HEK293 (cell line): ENCODE measurements at regions of chr17 and their contacts with region 1.

Region 1: GRCh38 chr17:50200457-50201275 is 765 bp downstream of the COL1A1 start:
- H3K4me3 ChIP-seq: peak overlapping the region; percentile 41
- H3K27ac ChIP-seq: no peak overlapping the region
- H3K4me1 ChIP-seq: no peaks in the 10 kb centered on the region
- CTCF ChIP-seq: peak; percentile 99

Region 2: DNA sequence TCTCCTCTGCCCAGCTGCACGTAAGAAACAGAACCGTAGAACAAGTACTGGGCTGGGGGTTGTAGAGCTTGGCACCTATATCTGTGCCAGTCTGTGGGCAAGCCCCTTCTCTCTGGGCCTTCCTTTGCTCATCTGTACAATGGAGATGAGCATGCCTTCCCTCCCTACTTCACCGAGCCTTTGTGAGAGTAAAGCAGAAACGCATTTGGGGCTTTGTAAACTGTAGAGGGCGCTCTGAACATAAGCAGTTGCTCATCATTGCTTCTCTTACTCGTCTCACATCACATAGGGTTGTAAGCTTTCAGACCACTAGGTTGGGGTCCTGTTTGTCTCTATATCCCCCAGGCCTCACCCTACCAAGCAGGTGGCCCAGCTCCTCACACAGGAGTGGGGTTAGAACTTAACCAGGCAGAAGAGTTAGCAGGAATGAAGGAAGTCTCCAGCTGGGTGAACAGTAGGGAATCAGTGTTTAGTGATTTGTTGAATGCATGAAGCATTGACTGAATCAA is 85.8 kb before region 1 on chr17:
- CTCF ChIA-PET with region 1: interaction called, 12 read pairs
- POLR2A ChIA-PET with region 1: interaction called, 6 read pairs
- H3K4me3 ChIP-seq: no peak overlapping the region
- H3K27ac ChIP-seq: no peak overlapping the region
- H3K4me1 ChIP-seq: no peaks in the 10 kb centered on the region; the same call in 1 of the 2 replicates
- CTCF ChIP-seq: peak; percentile 58

Region 3: GRCh38 chr17:50161023-50161910 is 39.4 kb before region 1 on chr17:
- CTCF ChIA-PET with region 1: interaction called, 174 read pairs
- POLR2A ChIA-PET with region 1: interaction called, 3 read pairs
- H3K4me3 ChIP-seq: peak overlapping the region; percentile 54
- H3K27ac ChIP-seq: peak overlapping the region; percentile 17; the same call in 1 of the 2 replicates
- H3K4me1 ChIP-seq: no peaks in the 10 kb centered on the region
- CTCF ChIP-seq: peak; percentile 100

Region 4: GRCh38 chr17:50177983-50178834 is 22.5 kb before region 1 on chr17:
- CTCF ChIA-PET with region 1: interaction called, 174 read pairs
- POLR2A ChIA-PET with region 1: interaction called, 31 read pairs
- H3K4me3 ChIP-seq: no peak overlapping the region
- H3K27ac ChIP-seq: peak overlapping the region; percentile 76
- H3K4me1 ChIP-seq: peaks cover 11% of the 10 kb centered on the region
- CTCF ChIP-seq: peak; percentile 99

Region 5: DNA sequence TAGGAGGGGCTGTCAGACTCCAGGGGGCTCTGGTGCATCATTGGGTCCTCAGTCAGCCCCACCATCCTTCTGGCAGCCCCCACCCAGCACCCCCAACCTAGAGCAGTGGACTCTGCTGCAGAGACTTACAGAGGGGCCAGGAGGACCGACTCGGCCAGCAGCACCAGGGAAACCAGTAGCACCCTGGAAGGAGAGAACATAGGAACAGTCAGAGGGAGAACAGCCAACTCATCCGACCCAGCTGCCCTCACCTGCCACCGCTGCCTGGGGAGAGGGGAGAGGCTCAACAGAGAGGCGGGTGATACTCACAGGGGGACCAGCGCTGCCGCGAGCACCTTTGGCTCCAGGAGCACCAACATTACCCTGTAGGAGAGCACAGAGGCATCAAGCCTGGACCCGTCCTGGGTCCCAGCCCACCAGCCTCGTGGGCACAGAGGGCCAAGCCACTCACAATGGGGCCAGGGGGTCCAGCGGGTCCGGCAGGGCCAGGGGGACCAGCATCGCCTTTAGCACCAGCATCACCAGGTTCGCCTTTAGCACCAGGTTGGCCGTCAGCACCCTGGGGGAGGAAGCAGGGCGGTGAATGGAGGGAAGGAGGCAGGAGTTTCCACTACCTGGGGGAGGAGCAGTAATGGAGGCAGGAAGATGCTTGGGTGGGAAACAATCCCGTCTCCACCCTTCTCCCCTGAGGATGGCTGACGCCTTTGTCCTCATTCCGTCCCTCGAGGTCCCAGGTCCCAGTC is 10.9 kb before region 1 on chr17:
- CTCF ChIA-PET with region 1: interaction called, 12 read pairs
- POLR2A ChIA-PET with region 1: no interaction called
- H3K4me3 ChIP-seq: no peak overlapping the region
- H3K27ac ChIP-seq: no peak overlapping the region
- H3K4me1 ChIP-seq: no peaks in the 10 kb centered on the region
- CTCF ChIP-seq: no peak

Region 6: DNA sequence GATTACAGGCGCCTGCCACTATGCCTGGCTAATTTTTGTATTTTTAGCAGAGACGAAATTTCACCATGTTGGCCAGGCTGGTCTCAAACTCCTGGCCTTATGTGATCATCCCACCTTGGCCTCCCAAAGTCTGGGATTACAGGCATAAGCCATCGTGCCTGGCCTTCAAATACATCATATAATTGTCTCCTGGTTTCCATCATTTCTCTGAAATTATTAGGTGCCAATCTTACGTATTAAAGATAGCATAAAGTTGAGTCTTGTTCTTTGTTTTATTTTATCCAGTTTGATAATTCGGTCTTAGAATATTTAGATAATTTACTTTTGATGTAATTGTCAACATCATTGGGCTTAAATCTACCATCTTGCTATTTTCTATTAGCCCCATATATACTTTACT is 40.8 kb after region 1 on chr17:
- CTCF ChIA-PET with region 1: interaction called, 11 read pairs
- POLR2A ChIA-PET with region 1: no interaction called
- H3K4me3 ChIP-seq: no peak overlapping the region
- H3K27ac ChIP-seq: no peak overlapping the region
- H3K4me1 ChIP-seq: no peaks in the 10 kb centered on the region
- CTCF ChIP-seq: no peak

Region 7: DNA sequence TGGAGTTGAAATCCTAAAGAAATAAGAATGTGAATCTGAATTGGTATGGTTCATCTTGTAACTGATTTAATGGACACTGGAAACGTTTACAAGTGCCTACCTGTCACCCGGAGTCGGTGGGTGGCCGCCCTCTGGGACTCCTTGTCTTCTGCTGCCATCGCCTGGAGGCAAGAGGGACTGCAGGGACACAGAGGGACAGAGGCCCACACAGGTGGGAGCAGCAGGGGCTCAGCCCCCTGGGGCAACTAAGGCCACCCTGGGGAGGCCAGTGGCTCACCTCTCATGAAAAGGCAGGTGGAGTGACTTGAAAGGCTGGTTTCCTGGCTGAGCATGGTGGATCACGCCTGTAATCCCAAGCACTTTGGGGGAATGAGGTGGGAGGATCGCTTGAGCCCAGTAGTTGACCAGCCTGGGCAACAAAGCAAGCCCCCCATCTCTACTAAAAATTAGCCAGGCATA is 96.8 kb after region 1 on chr17:
- CTCF ChIA-PET with region 1: interaction called, 308 read pairs
- POLR2A ChIA-PET with region 1: interaction called, 4 read pairs
- H3K4me3 ChIP-seq: no peak overlapping the region
- H3K27ac ChIP-seq: no peak overlapping the region
- H3K4me1 ChIP-seq: no peaks in the 10 kb centered on the region
- CTCF ChIP-seq: peak; percentile 92